ENCODE measurements at regions of chr19 and their contacts with region 1.

Region 1: DNA sequence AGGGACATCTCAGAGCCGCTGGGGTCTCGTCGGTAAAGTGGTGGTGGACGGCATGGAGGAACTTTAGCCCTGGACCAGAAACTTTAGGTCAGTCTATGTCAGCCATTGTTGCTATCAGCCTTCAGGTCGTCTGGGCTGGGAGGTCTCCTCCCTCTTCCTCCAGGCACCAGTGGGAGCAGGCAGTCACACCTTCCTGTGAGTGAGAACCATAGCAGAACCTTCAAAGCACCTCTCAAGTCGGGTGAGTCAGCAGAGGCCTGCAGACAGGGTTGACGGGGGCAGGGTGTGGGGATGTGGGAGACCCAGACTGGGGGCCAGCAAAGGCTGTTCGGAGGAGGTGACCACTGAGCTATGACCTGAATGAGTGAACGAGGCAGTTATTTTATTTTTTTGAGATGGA is 15.4 kb upstream of the SBNO2 start:
- DNase-seq: peak in 2 of 5 donors; percentile 37 to 73
- H3K4me3 ChIP-seq: no peak overlapping the region
- H3K4me3 Mint-ChIP-seq: peak overlapping the region in 6 of 7 donors; percentile 18 to 66 (median 46)
- H3K27ac ChIP-seq: peak overlapping the region; percentile 33
- H3K27ac Mint-ChIP-seq: peak overlapping the region; percentile 17 to 92 (median 75)
- H3K4me1 ChIP-seq: peaks cover 30% of the 10 kb centered on the region
- H3K4me1 Mint-ChIP-seq: peaks cover 19 to 27% (median 22%) of the 10 kb centered on the region in 3 donors
- H3K27me3 ChIP-seq: no peaks in the 10 kb centered on the region
- H3K27me3 Mint-ChIP-seq: peaks cover 0 to 2% of the 10 kb centered on the region in 2 donors

Region 2: DNA sequence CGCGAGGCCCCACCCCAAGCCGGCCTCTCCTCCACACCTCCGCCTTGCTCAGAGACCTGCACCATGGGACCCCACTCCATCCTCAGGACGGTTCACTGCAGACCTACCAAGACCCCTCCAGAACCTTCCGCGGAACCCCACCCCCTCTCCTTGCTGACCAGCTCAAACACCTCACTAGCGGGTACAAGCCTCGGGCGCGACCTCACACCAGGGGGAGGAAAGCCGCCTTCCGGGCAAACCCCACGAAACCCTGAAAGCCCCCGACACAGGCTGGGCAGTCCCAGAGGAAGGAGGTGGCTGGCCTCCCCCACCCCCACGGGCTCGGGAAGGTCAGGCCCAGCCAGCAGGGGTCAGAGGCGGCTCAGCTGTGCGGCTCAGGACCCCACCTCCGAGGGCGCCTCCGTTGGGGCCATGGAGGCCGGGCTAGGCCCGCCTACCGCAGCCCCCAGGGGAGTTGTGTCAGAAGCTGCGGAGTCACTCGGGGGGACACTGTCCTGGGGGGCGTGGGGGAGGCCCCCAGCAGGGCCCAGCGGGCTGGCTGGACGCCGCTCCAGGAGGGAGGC is 179.4 kb before region 1 on chr19:
- CTCF ChIA-PET with region 1: no interaction called
- POLR2A ChIA-PET with region 1: no interaction called
- DNase-seq: no peak
- H3K4me3 ChIP-seq: no peak overlapping the region
- H3K4me3 Mint-ChIP-seq: no peak overlapping the region
- H3K27ac ChIP-seq: no peak overlapping the region
- H3K27ac Mint-ChIP-seq: no peak overlapping the region
- H3K4me1 ChIP-seq: no peaks in the 10 kb centered on the region
- H3K4me1 Mint-ChIP-seq: peaks cover 0 to 5% (median 3%) of the 10 kb centered on the region in 3 donors
- H3K27me3 ChIP-seq: no peaks in the 10 kb centered on the region
- H3K27me3 Mint-ChIP-seq: peaks cover 0 to 2% of the 10 kb centered on the region in 2 donors

Region 3: DNA sequence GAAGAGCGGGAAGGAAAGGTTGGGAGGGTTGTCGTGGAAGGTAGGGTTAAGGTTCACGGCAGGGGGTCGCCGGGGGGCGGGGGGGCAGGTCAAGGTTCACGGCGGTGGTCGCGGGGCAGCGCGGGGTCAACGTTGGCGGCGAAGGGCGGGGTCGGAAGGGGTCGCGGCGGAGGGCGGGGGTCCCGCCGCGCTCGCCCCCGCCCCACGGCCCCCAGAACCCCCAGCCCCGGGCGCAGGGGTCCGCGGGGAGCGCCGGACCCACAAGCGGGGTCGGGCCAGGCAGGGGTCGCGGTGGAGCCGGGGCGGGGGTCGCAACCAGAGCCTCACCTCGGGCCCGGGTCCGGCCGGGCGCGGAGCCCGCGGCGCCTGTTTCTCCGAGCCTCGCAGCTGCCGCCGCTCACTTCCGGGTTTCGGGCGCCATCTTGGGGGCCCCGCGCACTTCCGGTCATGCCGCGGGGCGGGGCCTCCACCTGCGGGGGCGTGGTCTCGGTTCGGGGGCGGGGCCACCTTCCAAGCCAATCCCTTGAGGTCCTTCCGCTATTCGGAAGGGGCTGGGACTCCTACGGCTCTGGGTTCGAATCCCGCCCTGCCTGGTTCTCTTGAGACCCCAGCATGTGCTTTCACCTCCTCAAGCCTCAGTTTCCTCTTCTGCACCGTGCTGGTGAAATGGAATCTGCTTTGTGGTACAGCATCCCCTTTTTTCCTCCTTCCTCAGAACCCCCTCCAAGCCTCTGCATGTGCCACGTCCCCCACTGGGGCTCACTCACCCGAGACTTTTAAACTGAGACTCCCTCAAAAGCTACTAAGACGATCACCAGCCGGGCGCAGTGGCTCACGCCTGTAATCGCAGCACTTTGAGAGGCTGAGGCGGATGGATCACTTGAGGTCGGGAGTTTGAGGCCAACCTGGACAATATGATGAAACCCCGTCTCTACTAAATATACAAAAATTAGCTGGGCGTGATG is 15.3 kb before region 1 on chr19 and contains the start of gene SBNO2:
- CTCF ChIA-PET with region 1: interaction called, 17 read pairs
- POLR2A ChIA-PET with region 1: interaction called, 3 read pairs
- DNase-seq: peak; percentile 81 to 90 (median 85)
- H3K4me3 ChIP-seq: peak within 1 kb of the TSS; percentile 79
- H3K4me3 Mint-ChIP-seq: peak within 1 kb of the TSS; percentile 87 to 95 (median 91)
- H3K27ac ChIP-seq: peak within 1 kb of the TSS; percentile 79
- H3K27ac Mint-ChIP-seq: peak within 1 kb of the TSS; percentile 85 to 97 (median 94)
- H3K4me1 ChIP-seq: peaks cover 4% of the 10 kb centered on the region
- H3K4me1 Mint-ChIP-seq: peaks cover 26 to 38% (median 27%) of the 10 kb centered on the region in 3 donors
- H3K27me3 ChIP-seq: no peaks in the 10 kb centered on the region
- H3K27me3 Mint-ChIP-seq: no peaks in the 10 kb centered on the region
- total RNA-seq, gene SBNO2: 59.0 to 61.0 TPM

Region 4: GRCh38 chr19:1205114-1206062 is 16.0 kb after region 1 on chr19 and contains the start of gene STK11:
- CTCF ChIA-PET with region 1: interaction called, 19 read pairs
- POLR2A ChIA-PET with region 1: interaction called, 5 read pairs
- DNase-seq: peak; percentile 99 to 100 (median 99)
- H3K4me3 ChIP-seq: peak within 1 kb of the TSS; percentile 90
- H3K4me3 Mint-ChIP-seq: peak within 1 kb of the TSS; percentile 92 to 98 (median 95)
- H3K27ac ChIP-seq: peak within 1 kb of the TSS; percentile 67
- H3K27ac Mint-ChIP-seq: peak within 1 kb of the TSS; percentile 79 to 98 (median 92)
- H3K4me1 ChIP-seq: peaks cover 40% of the 10 kb centered on the region
- H3K4me1 Mint-ChIP-seq: peaks cover 17 to 42% (median 25%) of the 10 kb centered on the region in 3 donors
- H3K27me3 ChIP-seq: no peaks in the 10 kb centered on the region
- H3K27me3 Mint-ChIP-seq: no peaks in the 10 kb centered on the region
- total RNA-seq, gene STK11: 66.9 to 69.7 TPM